Stomach (tissue), 19 donors: ENCODE measurements at regions of chr12 and their contacts with region 1.

Region 1: GRCh38 chr12:121110211-121110940 is 22.3 kb upstream of the P2RX7 start:
- DNase-seq: peak; percentile 72 to 89
- H3K4me3 ChIP-seq: no peak overlapping the region
- H3K27ac ChIP-seq: no peak overlapping the region
- H3K4me1 ChIP-seq: peaks cover 0 to 4% (median 0%) of the 10 kb centered on the region in 4 donors
- H3K27me3 ChIP-seq: no peaks in the 10 kb centered on the region
- CTCF ChIP-seq: peak in 5 of 7 experiments; percentile 85 to 92 (median 91)
- EP300 ChIP-seq: no peak
- POLR2A ChIP-seq: no peak

Region 2: GRCh38 chr12:121154793-121155375 is 44.5 kb after region 1 on chr12:
- intact Hi-C with region 1: no loop called
- DNase-seq: no peak
- H3K4me3 ChIP-seq: no peak overlapping the region
- H3K27ac ChIP-seq: no peak overlapping the region
- H3K4me1 ChIP-seq: no peaks in the 10 kb centered on the region
- H3K27me3 ChIP-seq: no peaks in the 10 kb centered on the region
- CTCF ChIP-seq: no peak
- EP300 ChIP-seq: no peak
- POLR2A ChIP-seq: no peak

Region 3: GRCh38 chr12:121223292-121224285 is 113.2 kb after region 1 on chr12:
- intact Hi-C with region 1: loop called (anchors 10 kb)
- DNase-seq: peak in 1 of 2 donors; percentile 52
- H3K4me3 ChIP-seq: no peak overlapping the region
- H3K27ac ChIP-seq: peak overlapping the region; percentile 30 to 60 (median 37)
- H3K4me1 ChIP-seq: peaks cover 9 to 29% (median 29%) of the 10 kb centered on the region in 4 donors
- H3K27me3 ChIP-seq: no peaks in the 10 kb centered on the region
- CTCF ChIP-seq: peak in 5 of 7 experiments; percentile 17 to 52 (median 33)
- EP300 ChIP-seq: no peak
- POLR2A ChIP-seq: no peak